SK-N-SH (cell line): ENCODE measurements at regions of chr17 and their contacts with region 1.

Region 1: DNA sequence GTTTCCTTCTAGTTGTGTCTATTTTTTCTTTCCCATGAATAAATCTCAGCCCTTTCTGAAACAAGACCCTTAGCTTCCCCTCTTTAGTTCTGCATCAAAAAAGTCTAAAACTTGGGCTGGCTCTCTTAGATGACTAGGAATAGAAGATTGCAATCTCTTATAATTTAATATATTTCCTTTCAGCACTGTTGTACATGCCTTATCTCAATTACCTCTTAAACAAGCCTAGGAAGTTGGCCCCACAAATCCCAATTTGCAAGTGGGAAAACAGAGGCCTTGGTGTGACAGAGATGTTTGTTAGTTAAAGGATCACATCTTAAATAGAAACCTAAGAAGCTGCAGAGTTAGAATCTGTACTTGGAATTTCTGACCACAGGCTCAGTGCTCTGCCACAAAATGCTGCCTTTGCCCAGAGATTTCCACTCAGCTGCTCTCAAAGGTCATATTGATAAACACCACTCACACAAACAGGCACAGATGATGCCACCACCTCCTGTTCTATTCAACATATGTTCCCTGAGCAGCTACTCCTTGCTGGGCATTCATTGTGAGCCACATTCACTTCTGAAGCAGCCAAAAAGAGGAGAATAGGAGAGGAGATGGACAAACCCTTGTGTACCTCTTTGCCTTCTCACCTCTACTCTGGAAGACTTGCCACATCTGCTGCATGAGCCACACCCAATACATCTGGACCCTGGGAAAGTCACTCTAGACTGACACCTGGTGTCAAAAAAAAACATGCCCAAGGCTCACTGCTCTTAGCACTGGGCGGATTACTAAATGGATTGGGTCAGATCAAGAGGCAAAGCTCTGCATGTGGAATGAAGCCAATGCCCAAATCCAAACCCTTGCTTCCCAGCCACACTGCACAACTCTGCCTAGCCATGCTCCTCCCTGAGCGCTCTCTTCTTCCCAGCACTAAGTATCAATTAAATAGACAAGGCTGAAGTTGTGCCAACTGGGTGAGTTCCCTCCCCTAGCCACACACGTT is 5.4 kb downstream of the CCDC182 start:
- DNase-seq: peak; percentile 76
- H3K4me3 ChIP-seq: no peak overlapping the region
- H3K27ac ChIP-seq: peak overlapping the region in 1 of 2 experiments; percentile 96; a peak in 3 of 4 replicates
- H3K4me1 ChIP-seq: peaks cover 0 to 17% of the 10 kb centered on the region in 2 experiments; a peak in 2 of 4 replicates
- H3K27me3 ChIP-seq: peaks cover 12% of the 10 kb centered on the region
- CTCF ChIP-seq: peak; percentile 45
- EP300 ChIP-seq: peak in 1 of 2 experiments; percentile 81; a peak in 2 of 4 replicates
- RAD21 ChIP-seq: peak; percentile 65

Region 2: DNA sequence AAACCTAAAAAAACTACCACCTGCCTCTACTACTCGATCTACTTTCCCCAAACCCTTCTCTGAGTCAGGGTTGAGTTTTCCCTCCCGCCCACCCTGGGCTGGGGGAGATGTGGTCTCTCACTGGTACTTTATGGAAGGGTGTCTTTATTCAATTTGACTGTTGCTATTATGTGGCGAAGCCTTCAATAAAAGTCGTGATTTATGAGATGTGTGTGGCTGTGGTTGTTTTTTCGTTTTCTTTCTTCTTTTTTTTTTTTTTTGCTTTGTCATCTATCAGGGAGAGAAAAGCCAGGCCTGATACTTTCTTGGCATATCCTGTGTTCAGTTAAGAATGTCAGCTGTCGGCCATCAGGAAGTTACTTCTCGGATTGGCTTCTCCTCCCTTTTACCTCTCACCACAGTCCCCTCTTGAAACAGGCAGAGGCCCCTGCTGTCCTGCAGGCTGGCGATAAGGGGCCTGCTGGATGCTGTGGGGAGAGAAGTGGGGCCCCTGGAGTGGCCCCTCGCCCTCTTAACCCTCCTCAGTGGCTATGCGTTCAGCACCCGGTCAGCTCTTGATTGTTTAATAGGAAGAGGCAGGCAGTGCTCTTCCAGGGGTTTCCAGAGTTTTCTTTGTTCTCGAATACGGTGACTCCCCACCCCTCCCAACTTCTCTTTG is 360.3 kb before region 1 on chr17:
- CTCF ChIA-PET with region 1: no interaction called
- POLR2A ChIA-PET with region 1: no interaction called
- DNase-seq: peak; percentile 67
- H3K4me3 ChIP-seq: no peak overlapping the region
- H3K27ac ChIP-seq: peak overlapping the region; percentile 32 to 65; a peak in 3 of 4 replicates
- H3K4me1 ChIP-seq: peaks cover 7 to 51% of the 10 kb centered on the region in 2 experiments
- H3K27me3 ChIP-seq: no peaks in the 10 kb centered on the region
- CTCF ChIP-seq: no peak
- EP300 ChIP-seq: peak; percentile 75 to 79; a peak in 3 of 4 replicates
- RAD21 ChIP-seq: peak; percentile 17; the same call in 1 of the 2 replicates

Region 3: GRCh38 chr17:57440522-57441485 is 298.9 kb before region 1 on chr17:
- CTCF ChIA-PET with region 1: no interaction called
- POLR2A ChIA-PET with region 1: no interaction called
- DNase-seq: peak; percentile 82
- H3K4me3 ChIP-seq: no peak overlapping the region
- H3K27ac ChIP-seq: peak overlapping the region; percentile 70 to 96
- H3K4me1 ChIP-seq: peaks cover 47 to 86% of the 10 kb centered on the region in 2 experiments
- H3K27me3 ChIP-seq: no peaks in the 10 kb centered on the region
- CTCF ChIP-seq: peak; percentile 53
- EP300 ChIP-seq: peak in 1 of 2 experiments; percentile 60; a peak in 1 of 4 replicates
- RAD21 ChIP-seq: peak; percentile 68

Region 4: DNA sequence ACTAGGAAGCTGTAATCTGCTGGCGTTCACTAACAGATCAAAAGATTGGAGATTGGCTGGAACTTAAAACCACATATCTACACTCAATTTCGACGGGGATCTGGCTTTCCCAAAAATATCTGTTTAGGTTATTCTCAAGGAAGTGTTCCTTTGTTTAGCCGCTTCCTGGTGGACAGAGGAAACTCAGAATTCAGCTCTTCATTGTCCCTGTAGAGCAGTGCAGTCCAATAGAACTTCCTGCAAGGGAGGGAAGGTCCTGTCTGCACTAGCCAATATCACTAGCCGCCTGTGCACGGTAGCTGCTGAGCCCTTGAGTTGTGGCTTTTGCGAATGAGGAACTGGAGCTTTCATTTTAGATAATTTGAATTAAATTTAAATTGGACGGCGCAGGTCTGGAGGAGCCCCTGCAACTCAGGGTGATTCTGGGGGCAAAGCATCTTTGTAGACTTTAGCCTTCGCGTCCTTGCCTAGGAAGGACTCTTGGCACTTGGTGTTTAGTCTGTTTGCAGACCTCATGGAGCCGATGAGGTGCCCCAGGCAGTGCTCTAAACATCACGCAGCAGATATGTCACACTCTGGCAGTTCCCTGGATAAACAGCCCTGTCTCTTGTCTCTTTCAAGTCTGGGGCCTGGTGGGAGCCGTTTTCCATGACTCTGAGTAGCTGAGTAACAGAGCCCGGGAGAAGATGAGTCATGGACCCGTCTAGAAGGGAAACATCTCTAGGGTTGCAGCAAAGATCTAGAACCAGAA is 116.8 kb before region 1 on chr17:
- CTCF ChIA-PET with region 1: interaction called, 12 read pairs
- POLR2A ChIA-PET with region 1: no interaction called
- DNase-seq: peak; percentile 82
- H3K4me3 ChIP-seq: no peak overlapping the region
- H3K27ac ChIP-seq: peak overlapping the region; percentile 87 to 100
- H3K4me1 ChIP-seq: peaks cover 53 to 84% of the 10 kb centered on the region in 2 experiments
- H3K27me3 ChIP-seq: no peaks in the 10 kb centered on the region
- CTCF ChIP-seq: no peak
- EP300 ChIP-seq: peak; percentile 71 to 97; a peak in 3 of 4 replicates
- RAD21 ChIP-seq: peak; percentile 46

Region 5: GRCh38 chr17:57662644-57663308 is 76.9 kb before region 1 on chr17:
- CTCF ChIA-PET with region 1: interaction called, 12 read pairs
- POLR2A ChIA-PET with region 1: no interaction called
- DNase-seq: peak; percentile 97
- H3K4me3 ChIP-seq: peak overlapping the region; percentile 45 to 47
- H3K27ac ChIP-seq: peak overlapping the region; percentile 99 to 100
- H3K4me1 ChIP-seq: peaks cover 28 to 79% of the 10 kb centered on the region in 2 experiments
- H3K27me3 ChIP-seq: no peaks in the 10 kb centered on the region
- CTCF ChIP-seq: peak; percentile 37
- EP300 ChIP-seq: peak; percentile 54 to 88; a peak in 3 of 4 replicates
- RAD21 ChIP-seq: no peak; the same call in none of the 2 replicates

Region 6: DNA sequence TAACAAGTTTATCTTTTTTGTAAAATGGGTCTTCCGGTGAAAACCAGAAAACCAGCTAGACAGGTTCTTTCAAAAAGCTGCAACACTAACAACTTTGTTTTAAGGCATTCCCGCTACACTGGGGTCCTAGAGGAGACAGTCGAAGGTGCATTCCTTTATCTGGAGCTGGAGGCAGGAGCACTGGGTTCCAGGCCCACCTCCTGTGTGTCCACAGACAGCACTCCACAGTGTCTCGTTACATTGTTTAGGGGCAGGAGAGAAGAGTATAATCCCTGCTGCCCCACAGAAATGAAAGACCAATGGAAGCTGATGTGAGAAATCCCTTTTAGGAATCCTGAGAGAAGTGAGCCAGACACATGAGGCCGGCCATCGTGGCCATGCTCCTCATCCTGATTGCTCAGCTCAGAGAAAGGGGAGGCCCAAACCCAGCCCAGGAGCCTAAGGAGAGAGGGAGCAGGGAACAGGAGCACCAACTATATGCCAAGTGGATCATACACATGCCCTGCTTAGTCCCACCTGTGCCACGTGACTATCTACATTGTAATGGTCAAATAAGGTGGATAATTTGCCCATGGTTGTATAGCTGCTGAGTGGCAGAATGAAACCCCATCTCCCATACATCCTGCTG is 54.1 kb before region 1 on chr17:
- CTCF ChIA-PET with region 1: interaction called, 10 read pairs
- POLR2A ChIA-PET with region 1: no interaction called
- DNase-seq: no peak
- H3K4me3 ChIP-seq: no peak overlapping the region
- H3K27ac ChIP-seq: peak overlapping the region in 1 of 2 experiments; percentile 97; a peak in 2 of 4 replicates
- H3K4me1 ChIP-seq: peaks cover 0 to 32% of the 10 kb centered on the region in 2 experiments; a peak in 2 of 4 replicates
- H3K27me3 ChIP-seq: no peaks in the 10 kb centered on the region
- CTCF ChIP-seq: no peak
- EP300 ChIP-seq: no peak
- RAD21 ChIP-seq: no peak

Region 7: DNA sequence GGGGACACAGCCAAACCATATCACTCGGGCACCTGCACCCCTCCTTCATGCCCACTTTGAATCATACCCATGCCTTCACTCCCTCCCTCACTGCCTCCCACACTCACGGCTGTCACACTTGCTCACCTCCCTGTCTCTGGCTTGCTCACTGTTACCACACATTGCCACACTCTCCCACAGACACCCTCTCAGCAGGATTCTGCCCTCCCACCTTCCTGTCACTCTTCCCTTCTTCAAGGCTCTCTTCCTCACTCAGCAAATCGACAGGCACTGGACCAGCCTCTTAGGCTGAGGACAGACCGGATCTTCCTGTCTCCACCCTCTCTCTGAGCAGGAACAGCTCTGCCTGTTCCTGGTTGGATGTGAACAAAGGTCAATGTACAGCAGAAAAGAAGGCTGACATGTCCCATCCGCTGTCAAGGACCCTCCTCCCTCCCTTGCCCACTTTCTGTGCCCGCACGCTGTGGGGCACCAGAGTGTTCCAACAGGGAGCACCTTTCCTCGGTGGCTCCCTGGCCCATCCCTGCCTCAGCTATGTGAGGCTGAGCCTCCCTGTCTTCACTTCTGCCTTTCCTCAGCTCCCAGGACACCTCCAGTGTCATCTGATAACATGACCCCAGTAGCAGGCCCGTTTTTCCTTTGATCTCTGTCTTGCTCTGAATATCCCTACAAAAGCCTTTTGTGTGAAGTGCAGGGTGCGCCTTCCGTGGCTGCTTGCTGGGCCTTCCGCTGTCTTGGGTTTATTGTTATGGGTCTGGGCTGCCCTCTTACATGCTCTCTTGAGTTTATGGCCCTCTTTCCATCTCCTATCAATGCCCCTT is 41.6 kb before region 1 on chr17:
- CTCF ChIA-PET with region 1: interaction called, 10 read pairs
- POLR2A ChIA-PET with region 1: no interaction called
- DNase-seq: no peak
- H3K4me3 ChIP-seq: no peak overlapping the region
- H3K27ac ChIP-seq: no peak overlapping the region; a peak in 1 of 4 replicates
- H3K4me1 ChIP-seq: peaks cover 0 to 22% of the 10 kb centered on the region in 2 experiments; a peak in 2 of 4 replicates
- H3K27me3 ChIP-seq: no peaks in the 10 kb centered on the region
- CTCF ChIP-seq: no peak
- EP300 ChIP-seq: no peak
- RAD21 ChIP-seq: no peak

Region 8: GRCh38 chr17:57727630-57728175 is 12.0 kb before region 1 on chr17:
- CTCF ChIA-PET with region 1: interaction called, 12 read pairs
- POLR2A ChIA-PET with region 1: no interaction called
- DNase-seq: no peak
- H3K4me3 ChIP-seq: no peak overlapping the region
- H3K27ac ChIP-seq: no peak overlapping the region
- H3K4me1 ChIP-seq: peaks cover 0 to 23% of the 10 kb centered on the region in 2 experiments; a peak in 1 of 4 replicates
- H3K27me3 ChIP-seq: peaks cover 16% of the 10 kb centered on the region
- CTCF ChIP-seq: no peak
- EP300 ChIP-seq: no peak
- RAD21 ChIP-seq: no peak